OCI-LY7 (cell line): ENCODE measurements at regions of chr20 and their contacts with region 1.

Region 1: DNA sequence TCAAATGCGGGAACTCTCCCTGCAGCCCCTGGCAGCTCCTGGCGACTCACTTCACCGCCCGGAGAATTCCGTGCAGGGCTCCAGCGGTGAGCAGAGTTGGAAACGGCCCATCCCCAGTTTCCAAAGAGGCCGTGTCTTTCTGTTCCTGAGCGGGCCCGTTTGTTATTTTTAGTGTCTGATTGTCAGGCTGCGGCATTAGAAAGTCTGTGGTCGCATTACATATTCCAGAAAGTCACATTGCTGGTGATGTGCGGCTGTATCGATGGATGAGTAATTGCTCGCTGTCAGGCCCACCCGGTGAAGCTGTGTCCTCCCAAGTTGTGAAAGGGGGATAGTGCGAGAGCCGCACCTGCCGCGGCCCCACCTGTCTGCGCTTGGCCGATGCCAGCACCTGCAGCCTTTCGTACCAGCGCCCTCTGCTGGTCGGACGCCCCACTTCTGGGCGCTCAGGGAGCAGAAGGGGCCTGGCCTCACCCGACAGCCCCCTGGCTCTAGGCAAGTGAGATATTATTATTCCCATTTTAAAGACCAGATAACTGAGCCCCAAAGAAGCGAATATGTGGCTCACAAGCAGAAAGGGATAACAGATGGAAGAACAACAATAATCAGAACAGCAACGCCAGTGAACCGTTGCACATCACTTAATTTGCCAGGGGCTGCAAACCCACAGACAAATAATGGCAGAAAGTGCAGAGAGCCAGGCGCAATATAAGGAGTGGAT is 244.9 kb downstream of the TSHZ2 start:
- DNase-seq: peak; percentile 77
- H3K4me3 ChIP-seq: no peak overlapping the region
- H3K27ac ChIP-seq: no peak overlapping the region
- H3K4me1 ChIP-seq: peaks cover 4% of the 10 kb centered on the region
- CTCF ChIP-seq: peak; percentile 95

Region 2: DNA sequence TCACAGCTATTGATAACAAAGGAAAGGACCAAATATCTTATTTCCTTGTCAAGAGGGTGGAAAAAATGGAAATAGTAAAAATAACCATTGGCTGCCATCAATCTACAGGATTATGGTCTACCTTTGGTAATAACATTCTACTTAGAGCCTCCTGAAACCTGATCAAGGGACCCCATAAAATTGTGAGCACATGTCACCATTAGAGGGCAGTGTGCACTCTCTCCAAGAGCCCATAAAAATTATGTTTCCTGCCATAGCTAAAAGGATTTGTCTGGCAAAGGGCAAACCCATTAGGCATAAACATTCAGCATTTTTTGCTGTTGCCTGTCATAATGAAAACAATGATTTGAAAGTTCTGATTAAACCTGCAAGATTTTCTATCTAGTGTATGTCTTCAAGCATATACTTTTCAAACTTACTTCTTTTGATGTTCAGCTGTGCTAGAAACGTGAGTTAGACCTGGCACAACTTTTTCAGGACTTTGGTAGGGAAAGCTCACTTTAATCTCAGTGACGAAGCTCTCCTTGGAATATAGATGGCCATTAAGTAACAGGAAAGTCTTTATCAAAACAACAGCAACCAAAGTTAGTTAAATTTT is 904.8 kb before region 1 on chr20:
- CTCF ChIA-PET with region 1: no interaction called
- POLR2A ChIA-PET with region 1: no interaction called
- intact Hi-C with region 1: loop called (anchors 2 kb)
- DNase-seq: peak; percentile 69
- H3K4me3 ChIP-seq: no peak overlapping the region
- H3K27ac ChIP-seq: no peak overlapping the region
- H3K4me1 ChIP-seq: no peaks in the 10 kb centered on the region
- CTCF ChIP-seq: peak; percentile 92

Region 3: GRCh38 chr20:52747845-52748284 is 469.2 kb before region 1 on chr20:
- CTCF ChIA-PET with region 1: no interaction called
- POLR2A ChIA-PET with region 1: no interaction called
- intact Hi-C with region 1: loop called (anchors 1 kb)
- DNase-seq: peak; percentile 37
- H3K4me3 ChIP-seq: no peak overlapping the region
- H3K27ac ChIP-seq: no peak overlapping the region
- H3K4me1 ChIP-seq: no peaks in the 10 kb centered on the region
- CTCF ChIP-seq: peak; percentile 77

Region 4: GRCh38 chr20:52937591-52938102 is 279.4 kb before region 1 on chr20:
- CTCF ChIA-PET with region 1: no interaction called
- POLR2A ChIA-PET with region 1: no interaction called
- intact Hi-C with region 1: loop called (anchors 10 kb)
- DNase-seq: no peak
- H3K4me3 ChIP-seq: no peak overlapping the region
- H3K27ac ChIP-seq: no peak overlapping the region
- H3K4me1 ChIP-seq: no peaks in the 10 kb centered on the region
- CTCF ChIP-seq: peak; percentile 38; the same call in 1 of the 2 replicates

Region 5: GRCh38 chr20:53021934-53022333 is 195.1 kb before region 1 on chr20:
- CTCF ChIA-PET with region 1: no interaction called
- POLR2A ChIA-PET with region 1: interaction called, 3 read pairs
- intact Hi-C with region 1: loop called (anchors 5 kb)
- DNase-seq: no peak
- H3K4me3 ChIP-seq: no peak overlapping the region
- H3K27ac ChIP-seq: no peak overlapping the region
- H3K4me1 ChIP-seq: peaks cover 32% of the 10 kb centered on the region
- CTCF ChIP-seq: no peak

Region 6: DNA sequence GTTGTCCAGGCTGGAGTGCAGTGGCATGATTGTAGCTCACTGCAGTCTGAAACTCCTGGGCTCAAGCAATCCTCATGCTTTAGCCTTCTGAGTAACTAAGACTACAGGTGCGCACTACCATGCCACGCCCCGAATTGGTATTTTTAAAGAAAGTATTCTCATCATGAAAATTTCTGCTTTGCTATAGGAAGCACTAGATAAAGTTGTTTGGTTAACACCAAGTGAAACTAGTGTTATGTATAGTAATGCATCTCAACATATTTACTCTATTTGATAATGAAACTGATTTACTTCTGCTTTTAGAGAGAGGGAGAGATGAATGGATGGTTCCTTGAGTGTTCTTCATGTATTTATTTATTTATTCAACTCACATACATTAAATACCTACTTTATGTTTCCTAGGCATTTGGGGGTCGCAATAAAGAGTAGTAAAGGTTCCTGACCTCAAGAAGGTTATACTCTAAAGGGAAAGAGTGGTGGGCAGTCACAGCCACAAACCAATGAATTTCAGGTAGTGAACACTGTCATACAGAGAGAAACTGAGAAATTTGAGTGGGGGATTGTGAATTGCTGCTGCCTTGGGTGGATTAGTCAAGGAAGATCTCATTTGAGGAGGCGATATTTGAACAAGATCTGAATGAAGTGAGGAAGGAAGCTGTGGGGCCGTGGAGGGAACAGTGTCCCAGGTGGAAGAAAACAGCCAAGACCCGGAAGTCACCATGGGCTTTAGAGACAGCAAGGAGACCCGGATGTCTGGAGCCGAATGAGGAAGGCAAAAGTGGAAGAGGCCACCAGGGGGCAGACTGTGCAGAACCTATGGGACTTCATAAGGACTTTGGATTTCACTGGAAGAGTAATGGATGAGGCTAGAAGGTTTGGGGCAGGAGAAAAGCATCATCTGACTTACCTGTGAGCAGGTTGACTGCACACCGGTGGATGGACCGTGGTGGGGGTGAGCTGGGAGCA is 59.3 kb before region 1 on chr20:
- CTCF ChIA-PET with region 1: no interaction called
- POLR2A ChIA-PET with region 1: interaction called, 3 read pairs
- intact Hi-C with region 1: loop called (anchors 5 kb)
- DNase-seq: peak; percentile 79
- H3K4me3 ChIP-seq: peak overlapping the region; percentile 35
- H3K27ac ChIP-seq: peak overlapping the region; percentile 83
- H3K4me1 ChIP-seq: peaks cover 40% of the 10 kb centered on the region
- CTCF ChIP-seq: peak; percentile 83